ENCODE measurements at regions of chr2 and their contacts with region 1.

Region 1: DNA sequence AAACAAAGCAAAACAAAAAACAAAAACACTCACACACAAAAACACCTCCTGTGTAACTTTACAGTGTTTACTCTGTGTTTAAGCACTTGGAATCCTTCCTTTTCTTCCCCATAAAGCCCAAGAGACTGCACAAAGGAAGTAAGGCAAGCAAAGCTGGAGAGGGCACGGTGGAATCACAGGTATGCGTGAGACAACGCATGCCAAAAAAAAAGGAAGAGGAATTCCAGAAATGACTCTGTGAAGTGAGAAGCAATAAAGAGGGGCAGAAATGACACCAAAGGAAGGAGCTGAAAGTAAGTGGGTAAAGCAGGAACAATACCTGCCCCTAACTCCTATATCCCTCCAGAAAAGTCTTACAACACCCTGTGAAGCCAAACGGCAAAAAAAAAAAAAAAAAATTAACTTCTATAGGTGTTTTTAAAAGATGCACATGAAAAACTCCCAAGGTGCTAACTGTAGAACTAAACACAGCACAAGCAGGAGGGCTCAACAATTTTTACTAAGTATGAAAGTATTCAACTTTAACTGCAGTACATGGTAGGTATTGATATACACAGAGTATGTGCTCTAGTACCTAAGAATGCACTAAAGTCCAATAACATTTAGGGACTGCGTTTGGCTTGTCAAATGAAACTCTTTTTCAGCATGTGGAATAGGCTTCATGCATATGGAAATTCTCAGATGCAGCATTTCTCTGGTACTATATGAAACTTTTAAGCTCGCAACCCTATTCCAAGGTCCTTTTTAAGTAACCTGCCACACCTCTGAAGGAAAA is 9.1 kb downstream of the RND3 start:
- DNase-seq: no peak
- ATAC-seq: peak; percentile 16
- H3K4me3 ChIP-seq: no peak overlapping the region
- H3K27ac ChIP-seq: no peak overlapping the region
- H3K4me1 ChIP-seq: no peaks in the 10 kb centered on the region
- H3K27me3 ChIP-seq: no peaks in the 10 kb centered on the region; a peak in 1 of 4 replicates
- CTCF ChIP-seq: no peak
- EP300 ChIP-seq: no peak
- POLR2A ChIP-seq: no peak
- RAD21 ChIP-seq: no peak

Region 2: GRCh38 chr2:150425121-150425955 is 53.0 kb before region 1 on chr2:
- CTCF ChIA-PET with region 1: interaction called, 21 read pairs
- POLR2A ChIA-PET with region 1: interaction called, 4 read pairs
- RAD21 ChIA-PET with region 1: interaction called, 18 read pairs
- SMC1A ChIA-PET with region 1: interaction called, 18 read pairs
- in situ Hi-C with region 1: no loop called
- intact Hi-C with region 1: no loop called
- DNase-seq: no peak
- ATAC-seq: peak; percentile 51
- H3K4me3 ChIP-seq: no peak overlapping the region
- H3K27ac ChIP-seq: no peak overlapping the region
- H3K4me1 ChIP-seq: no peaks in the 10 kb centered on the region
- H3K27me3 ChIP-seq: no peaks in the 10 kb centered on the region
- CTCF ChIP-seq: no peak
- EP300 ChIP-seq: no peak
- POLR2A ChIP-seq: no peak
- RAD21 ChIP-seq: no peak

Region 3: DNA sequence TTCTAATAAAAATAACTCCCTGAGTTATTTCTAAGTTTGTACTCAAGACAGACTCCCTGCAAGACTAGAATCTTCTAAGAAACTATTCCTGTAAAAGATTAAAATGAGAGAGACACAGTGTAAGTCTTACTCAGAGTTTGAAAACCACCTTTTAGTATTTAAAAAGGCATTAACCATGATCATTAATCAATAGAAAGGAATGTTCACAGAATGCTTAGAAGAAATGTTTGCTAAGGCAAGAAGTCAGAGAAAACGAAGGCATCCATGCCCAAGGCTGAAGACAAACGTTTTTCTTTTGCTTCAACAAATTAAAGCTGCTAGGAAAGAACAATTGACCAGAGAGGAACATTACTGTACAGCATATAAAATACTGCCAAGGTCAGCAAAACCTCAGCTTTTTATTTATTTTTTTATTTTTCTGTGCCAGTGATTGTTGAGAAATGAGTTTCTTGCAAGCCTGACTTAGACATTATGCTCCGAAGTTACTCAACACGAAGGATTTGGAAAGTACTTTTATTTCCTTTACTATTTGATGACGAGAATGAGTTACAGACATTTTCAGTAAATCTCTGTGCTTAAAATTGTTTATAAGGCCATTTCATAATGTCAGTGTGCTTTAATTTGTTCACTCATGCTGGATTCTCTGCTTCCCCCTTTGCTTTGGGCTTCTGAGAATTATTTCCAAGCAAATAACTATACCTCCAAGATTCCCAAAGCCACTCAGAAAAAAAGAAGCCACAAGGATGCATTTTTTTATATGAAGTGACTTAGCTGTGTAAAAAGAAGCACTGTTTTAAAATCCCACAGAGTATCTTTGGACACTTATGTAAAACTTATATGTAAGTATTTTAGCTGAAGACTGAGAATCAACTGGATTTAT is 11.4 kb before region 1 on chr2:
- CTCF ChIA-PET with region 1: interaction called, 9 read pairs
- POLR2A ChIA-PET with region 1: interaction called, 9 read pairs
- RAD21 ChIA-PET with region 1: interaction called, 143 read pairs
- SMC1A ChIA-PET with region 1: interaction called, 66 read pairs
- in situ Hi-C with region 1: no loop called
- intact Hi-C with region 1: no loop called
- DNase-seq: no peak
- ATAC-seq: no peak
- H3K4me3 ChIP-seq: no peak overlapping the region
- H3K27ac ChIP-seq: no peak overlapping the region
- H3K4me1 ChIP-seq: no peaks in the 10 kb centered on the region
- H3K27me3 ChIP-seq: no peaks in the 10 kb centered on the region; a peak in 1 of 4 replicates
- CTCF ChIP-seq: no peak
- EP300 ChIP-seq: no peak
- POLR2A ChIP-seq: no peak
- RAD21 ChIP-seq: no peak

Region 4: DNA sequence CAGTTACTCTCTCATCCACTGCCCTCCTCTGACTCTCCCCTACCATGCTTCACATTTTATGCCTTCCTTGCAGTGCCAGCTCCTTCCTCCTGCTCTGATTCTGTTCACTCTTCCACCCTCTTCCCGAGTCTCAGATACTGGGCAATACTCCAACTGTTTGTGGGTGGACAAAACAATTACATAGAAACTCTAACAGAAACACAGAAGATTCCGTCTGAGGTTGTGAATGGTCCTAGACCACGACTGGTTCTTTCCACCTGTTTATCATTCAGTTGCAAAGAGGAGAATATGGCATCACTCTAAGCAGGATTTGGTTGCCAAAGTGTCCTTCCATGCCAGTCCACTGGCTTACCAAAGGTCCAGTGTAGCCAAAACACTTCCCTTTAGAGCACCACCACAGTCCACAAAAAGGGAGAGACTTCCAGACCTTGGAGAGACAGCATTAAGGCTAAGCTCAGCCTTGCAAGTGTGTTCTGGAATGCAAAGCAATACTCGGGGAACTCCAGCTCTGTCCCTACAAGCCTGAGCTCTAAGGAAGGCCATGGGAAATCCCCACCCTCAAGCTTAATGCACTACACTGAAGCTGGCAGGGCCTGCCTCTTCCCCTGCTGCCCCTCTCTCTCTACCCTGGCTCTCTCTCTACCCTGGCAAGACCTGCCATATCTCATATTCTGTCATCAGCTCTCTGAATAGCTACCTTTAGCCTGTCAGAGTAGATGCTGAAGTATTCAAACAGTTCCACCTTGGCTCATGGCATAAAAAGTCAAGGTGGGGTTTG is 42.7 kb after region 1 on chr2:
- CTCF ChIA-PET with region 1: interaction called, 3 read pairs
- POLR2A ChIA-PET with region 1: interaction called, 3 read pairs
- RAD21 ChIA-PET with region 1: interaction called, 9 read pairs
- SMC1A ChIA-PET with region 1: interaction called, 30 read pairs
- in situ Hi-C with region 1: no loop called
- intact Hi-C with region 1: no loop called
- DNase-seq: no peak
- ATAC-seq: peak; percentile 89
- H3K4me3 ChIP-seq: no peak overlapping the region
- H3K27ac ChIP-seq: no peak overlapping the region
- H3K4me1 ChIP-seq: no peaks in the 10 kb centered on the region
- H3K27me3 ChIP-seq: no peaks in the 10 kb centered on the region
- CTCF ChIP-seq: no peak
- EP300 ChIP-seq: no peak
- POLR2A ChIP-seq: no peak
- RAD21 ChIP-seq: no peak

Region 5: GRCh38 chr2:150555611-150556356 is 77.4 kb after region 1 on chr2:
- CTCF ChIA-PET with region 1: interaction called, 3 read pairs
- POLR2A ChIA-PET with region 1: interaction called, 4 read pairs
- RAD21 ChIA-PET with region 1: interaction called, 6 read pairs
- SMC1A ChIA-PET with region 1: interaction called, 10 read pairs
- in situ Hi-C with region 1: no loop called
- intact Hi-C with region 1: no loop called
- DNase-seq: no peak
- ATAC-seq: peak; percentile 63
- H3K4me3 ChIP-seq: no peak overlapping the region
- H3K27ac ChIP-seq: no peak overlapping the region
- H3K4me1 ChIP-seq: no peaks in the 10 kb centered on the region
- H3K27me3 ChIP-seq: no peaks in the 10 kb centered on the region
- CTCF ChIP-seq: no peak
- EP300 ChIP-seq: no peak
- POLR2A ChIP-seq: no peak
- RAD21 ChIP-seq: no peak

Region 6: GRCh38 chr2:150570712-150571111 is 92.3 kb after region 1 on chr2:
- CTCF ChIA-PET with region 1: interaction called, 5 read pairs
- POLR2A ChIA-PET with region 1: interaction called, 6 read pairs
- RAD21 ChIA-PET with region 1: interaction called, 16 read pairs
- SMC1A ChIA-PET with region 1: interaction called, 23 read pairs
- in situ Hi-C with region 1: no loop called
- intact Hi-C with region 1: no loop called
- DNase-seq: no peak
- ATAC-seq: no peak
- H3K4me3 ChIP-seq: no peak overlapping the region
- H3K27ac ChIP-seq: no peak overlapping the region
- H3K4me1 ChIP-seq: peaks cover 3% of the 10 kb centered on the region; the same call in 1 of the 2 replicates
- H3K27me3 ChIP-seq: no peaks in the 10 kb centered on the region
- CTCF ChIP-seq: no peak
- EP300 ChIP-seq: no peak
- POLR2A ChIP-seq: no peak
- RAD21 ChIP-seq: no peak

Measured in GM12878 (cell line).